Sigmoid colon (tissue), 7 donors: ENCODE measurements at regions of chr12 and their contacts with region 1.

Region 1: GRCh38 chr12:66409195-66409871 is 107.0 kb downstream of the HELB start:
- DNase-seq: no peak
- H3K4me3 ChIP-seq: no peak overlapping the region
- H3K27ac ChIP-seq: no peak overlapping the region
- H3K4me1 ChIP-seq: no peaks in the 10 kb centered on the region
- H3K27me3 ChIP-seq: no peaks in the 10 kb centered on the region
- CTCF ChIP-seq: peak in 2 of 4 experiments; percentile 37 to 60
- EP300 ChIP-seq: no peak
- POLR2A ChIP-seq: no peak

Region 2: GRCh38 chr12:66288121-66288520 is 121.2 kb before region 1 on chr12:
- intact Hi-C with region 1: loop called (anchors 10 kb)
- DNase-seq: no peak
- H3K4me3 ChIP-seq: no peak overlapping the region
- H3K27ac ChIP-seq: no peak overlapping the region
- H3K4me1 ChIP-seq: no peaks in the 10 kb centered on the region
- H3K27me3 ChIP-seq: no peaks in the 10 kb centered on the region
- CTCF ChIP-seq: no peak
- EP300 ChIP-seq: no peak
- POLR2A ChIP-seq: no peak

Region 3: GRCh38 chr12:66449531-66449930 is 40.2 kb after region 1 on chr12:
- intact Hi-C with region 1: no loop called
- DNase-seq: no peak
- H3K4me3 ChIP-seq: no peak overlapping the region
- H3K27ac ChIP-seq: no peak overlapping the region
- H3K4me1 ChIP-seq: no peaks in the 10 kb centered on the region
- H3K27me3 ChIP-seq: no peaks in the 10 kb centered on the region
- CTCF ChIP-seq: no peak
- EP300 ChIP-seq: no peak
- POLR2A ChIP-seq: no peak